Calu3 (cell line): ENCODE measurements at regions of chr2 and their contacts with region 1.

Region 1: DNA sequence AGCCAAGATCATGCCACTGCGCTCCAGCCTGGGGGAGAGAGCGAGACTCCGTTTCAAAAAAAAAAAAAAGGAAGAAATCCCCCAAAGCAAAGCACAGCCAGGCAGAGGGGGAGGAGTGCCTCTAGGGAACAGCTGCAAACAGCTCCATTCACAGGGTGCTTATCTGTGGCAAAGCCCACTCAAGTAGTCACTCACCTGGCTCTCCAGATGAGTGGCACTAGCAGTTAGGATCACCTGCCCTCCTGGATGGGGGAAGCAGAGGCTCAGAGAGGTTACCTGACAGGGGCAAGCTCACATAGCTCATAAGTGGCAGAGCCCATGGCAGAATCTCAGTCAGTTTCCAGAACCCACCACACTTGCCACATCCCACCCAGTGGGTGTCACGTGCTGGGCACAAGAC is 30.3 kb downstream of the TFCP2L1 start:
- DNase-seq: peak; percentile 28
- H3K4me3 Mint-ChIP-seq: peak overlapping the region; percentile 44
- H3K27ac Mint-ChIP-seq: peak overlapping the region; percentile 95
- H3K4me1 Mint-ChIP-seq: peaks cover 42% of the 10 kb centered on the region
- H3K27me3 Mint-ChIP-seq: no peaks in the 10 kb centered on the region
- CTCF ChIP-seq: no peak

Region 2: DNA sequence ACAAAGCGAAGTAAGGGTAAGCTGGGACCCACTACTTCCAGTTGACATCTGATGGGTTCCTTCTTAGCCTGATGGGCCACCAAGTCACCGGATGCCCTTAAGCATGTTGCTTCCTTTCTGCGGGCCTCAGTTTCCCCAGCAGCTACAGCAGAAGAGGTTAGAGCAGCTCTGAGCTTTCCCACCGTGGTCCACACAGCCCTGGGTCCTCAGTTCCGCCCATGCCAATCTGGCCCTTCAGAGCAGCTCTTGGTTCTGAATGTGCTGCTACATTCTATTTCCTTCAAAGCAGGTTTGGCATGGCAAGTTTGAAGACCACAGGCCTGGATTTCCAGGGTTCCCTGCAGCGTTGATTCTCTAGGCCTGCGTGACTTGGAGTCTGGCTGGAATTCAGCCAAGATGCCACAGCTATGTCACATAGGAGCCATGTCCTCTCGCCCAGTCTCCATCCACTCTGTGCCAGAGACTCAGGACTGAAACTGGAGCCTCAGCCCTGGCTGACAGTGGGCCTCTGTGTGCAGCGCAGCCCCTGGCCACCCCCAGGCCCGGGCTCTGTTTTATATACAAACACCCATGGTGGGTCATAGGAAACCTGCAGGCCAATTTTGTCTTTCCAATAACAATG is 49.3 kb before region 1 on chr2:
- CTCF ChIA-PET with region 1: interaction called, 5 read pairs
- intact Hi-C with region 1: loop called (anchors 5 kb)
- DNase-seq: peak; percentile 84
- H3K4me3 Mint-ChIP-seq: no peak overlapping the region
- H3K27ac Mint-ChIP-seq: peak overlapping the region; percentile 47
- H3K4me1 Mint-ChIP-seq: peaks cover 49% of the 10 kb centered on the region
- H3K27me3 Mint-ChIP-seq: no peaks in the 10 kb centered on the region
- CTCF ChIP-seq: no peak

Region 3: DNA sequence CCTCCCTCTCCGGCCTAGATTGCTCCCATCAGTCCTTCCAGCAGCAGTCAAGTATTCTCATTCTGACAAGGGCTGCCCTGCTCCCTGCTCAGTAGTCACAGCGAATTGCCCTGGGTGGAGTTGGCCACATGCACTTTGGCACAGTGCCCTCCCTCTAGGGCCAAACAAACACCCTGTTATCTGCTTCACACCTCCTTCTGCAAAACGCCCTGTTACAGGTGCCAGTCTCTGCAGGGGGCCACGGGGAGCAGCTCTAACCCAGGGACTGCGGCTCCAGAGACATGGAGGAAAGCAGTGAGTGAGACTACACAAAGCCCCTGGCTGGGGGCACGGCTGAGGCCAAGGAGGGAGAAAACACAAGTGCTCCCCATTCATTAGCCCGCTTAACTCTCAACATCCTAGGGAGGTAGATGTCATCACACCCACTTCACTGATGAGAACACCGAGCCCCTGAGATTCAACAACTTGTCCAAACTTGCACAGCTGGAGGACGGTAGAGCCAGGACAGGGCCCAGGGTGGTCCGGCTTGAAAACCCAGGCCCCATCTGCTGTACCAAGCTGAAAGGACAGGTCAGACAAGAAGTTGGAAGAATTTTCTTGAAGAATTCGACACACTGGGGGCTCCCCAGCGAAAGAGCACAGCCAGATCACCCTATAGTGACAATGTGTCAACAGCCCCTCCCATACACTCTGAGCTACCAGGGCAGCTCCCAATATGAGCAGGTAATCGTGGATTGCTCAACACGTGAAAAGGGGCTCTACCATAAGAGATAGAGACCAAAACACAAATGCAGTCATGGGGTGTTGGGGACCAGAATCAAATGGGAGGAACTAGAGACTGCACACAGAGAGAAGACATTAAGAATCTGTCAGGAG is 38.9 kb after region 1 on chr2:
- CTCF ChIA-PET with region 1: interaction called, 3 read pairs
- intact Hi-C with region 1: loop called (anchors 5 kb)
- DNase-seq: peak; percentile 69
- H3K4me3 Mint-ChIP-seq: no peak overlapping the region
- H3K27ac Mint-ChIP-seq: no peak overlapping the region
- H3K4me1 Mint-ChIP-seq: peaks cover 24% of the 10 kb centered on the region
- H3K27me3 Mint-ChIP-seq: no peaks in the 10 kb centered on the region
- CTCF ChIP-seq: no peak